ENCODE measurements at regions of chr13 and their contacts with region 1.

Region 1: GRCh38 chr13:43235028-43235427 is 211.6 kb downstream of the DNAJC15 start:
- DNase-seq: no peak
- ATAC-seq: no peak
- H3K4me3 ChIP-seq: no peak overlapping the region
- H3K27ac ChIP-seq: no peak overlapping the region
- H3K4me1 ChIP-seq: peaks cover 0 to 5% (median 0%) of the 10 kb centered on the region in 9 donors
- H3K27me3 ChIP-seq: no peaks in the 10 kb centered on the region
- CTCF ChIP-seq: no peak

Region 2: DNA sequence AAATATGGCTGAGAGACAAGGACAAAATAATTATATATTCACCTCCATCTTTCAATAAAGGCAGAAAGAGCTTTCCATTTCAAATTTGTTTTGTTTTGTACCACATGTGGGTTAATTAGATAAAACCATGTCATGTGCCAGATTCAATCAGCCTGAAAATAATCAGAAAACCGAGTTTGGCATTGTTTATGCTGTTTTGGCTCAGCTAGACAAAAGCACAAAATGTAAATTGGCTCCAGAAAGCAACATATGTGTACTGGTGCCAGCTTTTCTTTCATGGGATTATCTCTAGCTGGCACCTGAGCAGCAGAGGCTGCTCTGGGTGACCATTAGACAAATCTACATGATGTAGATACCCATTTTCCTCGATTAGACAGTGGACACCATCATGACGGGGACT is 220.9 kb before region 1 on chr13:
- intact Hi-C with region 1: loop called in 1 of 10 experiments (anchors 2 kb)
- DNase-seq: no peak
- ATAC-seq: no peak
- H3K4me3 ChIP-seq: no peak overlapping the region
- H3K27ac ChIP-seq: no peak overlapping the region
- H3K4me1 ChIP-seq: no peaks in the 10 kb centered on the region
- H3K27me3 ChIP-seq: no peaks in the 10 kb centered on the region
- CTCF ChIP-seq: no peak

Measured in heart right ventricle (tissue), 16 donors.